ENCODE measurements at regions of chr17 and their contacts with region 1.

Region 1: GRCh38 chr17:9064311-9064844 is 43.1 kb downstream of the NTN1 start:
- DNase-seq: no peak
- H3K27ac ChIP-seq: no peak overlapping the region
- CTCF ChIP-seq: no peak

Region 2: GRCh38 chr17:9026741-9027140 is 37.6 kb before region 1 on chr17:
- CTCF ChIA-PET with region 1: no interaction called
- POLR2A ChIA-PET with region 1: interaction called, 10 read pairs
- DNase-seq: no peak
- H3K27ac ChIP-seq: no peak overlapping the region
- CTCF ChIP-seq: no peak